MCF 10A (cell line): ENCODE measurements at regions of chr6 and their contacts with region 1.

Region 1: DNA sequence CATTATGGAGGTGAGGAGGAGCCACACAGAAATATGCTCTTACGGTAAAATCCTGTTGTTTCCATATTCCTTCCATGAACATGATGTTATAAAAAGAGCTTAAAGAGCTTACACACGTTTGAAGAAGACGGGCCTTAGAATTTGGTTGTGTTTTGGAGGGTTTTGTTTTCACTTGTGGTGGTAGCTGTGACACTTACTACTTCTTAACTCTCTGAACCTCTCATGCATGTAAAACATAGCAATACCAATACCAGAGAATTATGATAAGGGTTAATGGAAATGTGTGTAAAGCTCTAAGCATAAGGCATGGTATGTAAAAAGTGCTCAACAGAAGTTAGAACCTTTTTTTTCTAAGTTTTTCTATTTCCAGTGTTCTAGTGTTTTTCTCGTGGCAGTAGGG is 256.1 kb upstream of the KCNQ5 start:
- DNase-seq: no peak
- H3K4me3 Mint-ChIP-seq: no peak overlapping the region
- H3K27ac Mint-ChIP-seq: no peak overlapping the region
- H3K4me1 Mint-ChIP-seq: peaks cover 8% of the 10 kb centered on the region
- H3K27me3 Mint-ChIP-seq: peaks cover 42% of the 10 kb centered on the region
- CTCF ChIP-seq: no peak

Region 2: GRCh38 chr6:71965404-71965803 is 400.4 kb before region 1 on chr6:
- CTCF ChIA-PET with region 1: no interaction called
- POLR2A ChIA-PET with region 1: no interaction called
- intact Hi-C with region 1: no loop called
- DNase-seq: no peak
- H3K4me3 Mint-ChIP-seq: no peak overlapping the region
- H3K27ac Mint-ChIP-seq: no peak overlapping the region
- H3K4me1 Mint-ChIP-seq: no peaks in the 10 kb centered on the region
- H3K27me3 Mint-ChIP-seq: peaks cover 68% of the 10 kb centered on the region
- CTCF ChIP-seq: no peak

Region 3: GRCh38 chr6:72401865-72402264 is 36.1 kb after region 1 on chr6:
- CTCF ChIA-PET with region 1: no interaction called
- POLR2A ChIA-PET with region 1: no interaction called
- intact Hi-C with region 1: loop called (anchors 5 kb)
- DNase-seq: no peak
- H3K4me3 Mint-ChIP-seq: no peak overlapping the region
- H3K27ac Mint-ChIP-seq: no peak overlapping the region
- H3K4me1 Mint-ChIP-seq: no peaks in the 10 kb centered on the region
- H3K27me3 Mint-ChIP-seq: peaks cover 100% of the 10 kb centered on the region
- CTCF ChIP-seq: no peak